ENCODE measurements at regions of chr20 and their contacts with region 1.

Region 1: DNA sequence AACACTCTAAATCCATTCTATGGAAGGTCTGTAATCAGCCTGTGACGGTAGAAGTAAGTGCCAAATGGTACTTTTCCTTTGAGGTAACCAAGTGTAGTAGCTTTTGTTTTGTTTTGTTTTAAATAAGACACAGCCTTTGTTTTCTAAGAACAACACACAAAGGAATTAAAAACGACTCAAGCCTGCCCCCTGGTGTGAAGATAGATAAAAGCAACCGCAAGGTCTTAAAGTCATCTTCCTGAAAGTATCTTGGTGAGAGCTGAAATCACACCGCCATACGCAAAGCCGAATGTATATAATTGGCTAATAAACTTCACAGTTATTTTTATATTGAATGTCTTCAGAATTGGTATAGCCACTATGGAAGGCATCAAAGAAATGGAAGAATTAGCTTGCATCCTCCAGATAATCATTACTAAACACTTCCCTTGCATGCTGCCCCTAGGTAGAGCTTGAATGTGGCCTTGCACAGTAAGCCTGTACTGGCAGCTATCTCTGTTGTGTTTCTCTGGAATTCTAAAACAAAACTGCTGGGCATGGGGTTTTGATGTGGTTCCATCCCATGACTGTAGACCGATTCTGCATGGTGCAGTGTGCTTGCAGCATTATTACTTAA is 95.6 kb downstream of the LAMP5 start:
- DNase-seq: peak in 6 of 10 donors; percentile 46 to 85 (median 64)
- H3K4me3 ChIP-seq: no peak overlapping the region
- H3K27ac ChIP-seq: peak overlapping the region in 1 of 59 donors; percentile 10
- H3K27me3 ChIP-seq: no peaks in the 10 kb centered on the region
- CTCF ChIP-seq: peak; percentile 49 to 95 (median 85)

Region 2: DNA sequence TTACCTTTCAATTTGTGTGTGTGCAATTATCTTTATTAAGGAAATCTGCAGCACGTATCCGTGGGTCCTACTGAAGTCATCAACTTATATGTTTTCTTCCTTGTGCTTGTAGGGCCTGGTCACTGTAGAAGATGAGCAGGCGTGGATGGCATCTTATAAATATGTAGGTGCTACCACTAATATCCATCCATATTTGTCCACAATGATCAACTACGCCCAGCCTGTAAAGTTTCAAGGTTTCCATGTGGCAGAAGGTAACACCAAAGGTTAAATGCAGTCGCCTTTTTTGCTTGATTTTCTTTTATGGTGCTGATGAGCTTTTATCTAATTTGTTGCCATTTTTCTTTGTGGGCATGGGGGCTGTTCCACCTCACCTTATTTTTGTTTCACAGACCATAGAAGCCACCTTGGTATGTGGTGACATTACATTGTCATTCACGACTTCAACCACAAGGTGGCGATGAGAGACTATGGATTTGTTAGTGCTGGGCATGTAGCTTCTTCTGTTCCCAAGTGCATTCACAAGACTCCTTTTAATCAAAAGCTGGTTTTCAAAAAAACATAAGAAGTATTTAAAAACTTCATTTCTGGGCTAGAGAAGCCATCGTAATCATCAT is 202.1 kb before region 1 on chr20:
- intact Hi-C with region 1: loop called (anchors 1 to 2 kb)
- DNase-seq: peak in 7 of 10 donors; percentile 52 to 89 (median 59)
- H3K4me3 ChIP-seq: no peak overlapping the region
- H3K27ac ChIP-seq: peak overlapping the region in 1 of 59 donors; percentile 70
- H3K27me3 ChIP-seq: no peaks in the 10 kb centered on the region
- CTCF ChIP-seq: peak; percentile 74 to 98 (median 91)

Region 3: DNA sequence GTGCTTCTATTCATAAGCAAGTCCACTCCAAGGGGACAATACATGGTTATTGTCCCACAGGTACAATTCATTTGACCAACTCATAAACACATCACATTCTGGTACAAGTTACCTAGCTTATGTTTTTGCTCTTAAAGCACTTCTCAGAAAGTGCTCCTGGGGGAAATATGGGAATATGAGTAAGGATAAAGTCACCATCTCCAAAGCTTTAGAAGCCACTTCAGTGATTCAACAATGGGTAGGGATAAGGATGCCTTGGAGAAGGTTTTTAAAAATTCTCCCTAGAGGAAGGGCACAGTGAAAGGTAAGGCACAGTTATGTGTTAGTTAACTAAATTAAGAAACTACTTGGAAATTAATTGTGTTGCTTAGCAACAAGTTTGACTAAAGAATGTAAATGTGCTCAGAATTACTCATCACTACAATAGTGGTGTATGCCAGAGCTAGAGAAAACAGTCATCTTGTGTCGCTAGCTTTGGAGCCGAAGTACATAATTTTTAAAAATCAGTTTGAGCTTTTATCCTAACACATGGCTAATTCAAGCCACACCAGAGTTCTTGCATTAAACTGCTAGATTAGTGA is 135.1 kb before region 1 on chr20:
- intact Hi-C with region 1: loop called in 1 of 2 experiments (anchors 5 kb)
- DNase-seq: no peak
- H3K4me3 ChIP-seq: no peak overlapping the region
- H3K27ac ChIP-seq: peak overlapping the region in 12 of 59 donors; percentile 0 to 41 (median 10)
- H3K27me3 ChIP-seq: no peaks in the 10 kb centered on the region
- CTCF ChIP-seq: no peak

Region 4: DNA sequence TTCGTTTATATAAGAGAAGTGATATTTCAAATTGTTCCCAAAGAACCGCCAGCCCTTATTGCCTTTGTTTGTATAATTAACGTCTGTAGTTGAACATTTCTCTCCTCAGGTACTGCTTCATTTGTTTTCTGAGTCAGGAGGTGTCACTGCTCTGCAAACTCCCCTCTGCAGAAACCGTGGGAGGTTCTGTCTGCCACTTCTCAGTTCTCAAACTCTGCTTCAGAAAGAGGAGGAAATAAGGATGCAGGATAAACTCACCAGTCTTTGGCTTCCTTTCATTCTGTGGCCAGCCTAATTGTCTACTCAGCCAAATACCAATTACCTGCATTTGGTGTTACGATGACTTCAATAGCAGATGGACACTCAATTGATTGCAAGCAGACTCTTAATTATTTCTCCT is 79.0 kb after region 1 on chr20:
- intact Hi-C with region 1: no loop called
- DNase-seq: peak in 1 of 10 donors; percentile 11
- H3K4me3 ChIP-seq: no peak overlapping the region
- H3K27ac ChIP-seq: peak overlapping the region in 2 of 59 donors; percentile 11 to 26
- H3K27me3 ChIP-seq: no peaks in the 10 kb centered on the region
- CTCF ChIP-seq: no peak